ENCODE measurements at regions of chr6 and their contacts with region 1.

Region 1: GRCh38 chr6:13908955-13909381 is 15.8 kb upstream of the RNF182 start:
- DNase-seq: peak in 31 of 42 donors; percentile 11 to 75 (median 51)

Region 2: GRCh38 chr6:14066782-14067406 is 157.9 kb after region 1 on chr6:
- intact Hi-C with region 1: loop called (anchors 10 kb)
- DNase-seq: peak in 12 of 42 donors; percentile 7 to 64 (median 22)

Measured in head of caudate nucleus (tissue), 42 donors.